Right ventricle myocardium inferior (tissue), 1 donor: ENCODE measurements at regions of chr1 and their contacts with region 1.

Region 1: GRCh38 chr1:76136894-76137293 is 62.3 kb downstream of the ST6GALNAC3 start:
- DNase-seq: no peak
- ATAC-seq: no peak

Region 2: DNA sequence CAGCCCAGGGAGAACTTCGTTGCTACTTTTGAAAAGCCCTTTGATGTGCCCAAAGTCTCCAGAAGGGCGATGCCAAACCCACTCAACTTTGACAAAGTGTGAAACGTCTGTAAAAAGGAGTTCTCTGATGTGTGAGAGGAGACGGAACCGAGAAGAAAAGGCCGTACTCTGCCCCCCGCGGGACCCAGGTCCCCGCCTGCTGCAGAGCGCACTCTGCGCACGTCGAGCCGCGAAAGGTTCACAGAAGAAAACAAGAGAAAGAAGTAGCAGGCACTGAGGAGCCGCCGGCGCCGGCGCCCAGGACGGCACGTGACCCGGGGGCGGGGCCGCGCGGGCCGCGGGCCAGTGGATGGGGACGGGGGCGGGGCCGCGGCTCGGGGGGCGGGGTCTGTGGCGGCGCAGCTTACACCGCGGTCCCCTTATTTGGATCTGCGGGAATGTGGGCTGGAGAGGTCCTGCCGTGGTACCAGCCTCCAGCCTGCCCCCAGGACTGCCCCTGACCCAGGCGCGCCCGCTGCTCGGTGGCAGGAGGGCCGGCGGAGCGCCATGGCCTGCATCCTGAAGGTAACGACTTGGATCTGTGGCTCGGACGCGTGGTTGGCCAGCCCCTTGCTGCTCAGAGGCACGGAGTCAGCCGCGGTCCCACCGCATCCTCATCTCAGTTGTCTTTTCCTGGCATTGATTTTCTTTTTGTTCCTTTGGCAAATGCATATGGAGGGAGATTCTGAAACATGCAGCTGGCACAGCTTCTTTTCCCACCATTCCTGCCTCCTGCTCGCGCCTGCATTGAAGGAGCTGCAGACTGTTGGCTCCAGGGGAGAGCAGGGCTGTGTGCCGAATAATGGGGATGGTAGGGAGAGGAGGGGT is 62.3 kb before region 1 on chr1 and contains the start of gene ST6GALNAC3:
- intact Hi-C with region 1: loop called (anchors 5 kb)
- DNase-seq: peak; percentile 92
- ATAC-seq: peak; percentile 96
- total RNA-seq, gene ST6GALNAC3: 3.9 TPM